ENCODE measurements at regions of chr17 and their contacts with region 1.

Region 1: DNA sequence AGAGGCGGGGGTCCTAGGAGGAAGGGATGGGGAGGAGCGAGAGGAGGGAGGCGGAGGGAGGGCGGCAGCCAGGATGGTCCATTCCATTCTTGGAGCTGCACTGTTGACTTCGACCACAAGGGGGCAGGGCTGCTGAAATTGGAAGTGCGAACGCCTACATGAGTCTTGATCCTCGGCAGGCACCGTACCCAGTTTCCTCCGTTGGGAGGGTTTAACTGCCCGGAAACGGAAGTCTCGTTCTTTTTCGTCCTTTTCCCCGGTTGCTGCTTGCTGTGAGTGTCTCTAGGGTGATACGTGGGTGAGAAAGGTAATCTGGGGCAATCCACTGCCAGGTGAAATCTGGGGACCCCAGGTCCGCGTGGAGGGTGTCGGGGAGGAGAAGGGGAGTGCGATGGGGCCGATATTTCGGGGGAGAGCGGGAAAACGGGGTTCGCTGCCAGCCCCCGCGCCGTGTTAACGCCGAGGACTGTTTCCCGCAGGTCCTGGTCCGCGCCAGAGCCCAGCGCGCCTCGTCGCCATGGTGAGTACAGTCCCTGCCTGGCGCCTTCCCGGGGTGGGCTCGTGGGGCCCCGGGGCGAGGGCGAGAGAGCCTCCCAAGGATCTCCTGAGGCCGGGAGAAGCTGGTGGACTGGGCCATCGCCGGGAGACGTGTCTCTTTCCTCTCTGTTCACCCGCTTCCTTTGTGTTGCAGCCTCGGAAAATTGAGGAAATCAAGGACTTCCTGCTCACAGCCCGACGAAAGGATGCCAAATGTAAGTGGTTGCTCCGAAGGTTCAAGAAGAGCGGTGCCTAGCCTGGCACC is at the start of gene RPL38:
- DNase-seq: peak; percentile 97 to 98
- H3K4me3 ChIP-seq: peak within 1 kb of the TSS; percentile 63 to 97 (median 92)
- H3K27ac ChIP-seq: peak within 1 kb of the TSS; percentile 65 to 91 (median 88)
- H3K4me1 ChIP-seq: peaks cover 33 to 61% (median 53%) of the 10 kb centered on the region in 4 donors
- H3K27me3 ChIP-seq: peaks cover 0 to 38% (median 8%) of the 10 kb centered on the region in 3 donors
- CTCF ChIP-seq: peak in 6 of 7 experiments; percentile 92 to 99 (median 97)
- EP300 ChIP-seq: no peak
- POLR2A ChIP-seq: peak in 2 of 4 donors; percentile 45 to 83
- total RNA-seq, gene RPL38: 37.7 to 1,270 (median 232) TPM

Region 2: DNA sequence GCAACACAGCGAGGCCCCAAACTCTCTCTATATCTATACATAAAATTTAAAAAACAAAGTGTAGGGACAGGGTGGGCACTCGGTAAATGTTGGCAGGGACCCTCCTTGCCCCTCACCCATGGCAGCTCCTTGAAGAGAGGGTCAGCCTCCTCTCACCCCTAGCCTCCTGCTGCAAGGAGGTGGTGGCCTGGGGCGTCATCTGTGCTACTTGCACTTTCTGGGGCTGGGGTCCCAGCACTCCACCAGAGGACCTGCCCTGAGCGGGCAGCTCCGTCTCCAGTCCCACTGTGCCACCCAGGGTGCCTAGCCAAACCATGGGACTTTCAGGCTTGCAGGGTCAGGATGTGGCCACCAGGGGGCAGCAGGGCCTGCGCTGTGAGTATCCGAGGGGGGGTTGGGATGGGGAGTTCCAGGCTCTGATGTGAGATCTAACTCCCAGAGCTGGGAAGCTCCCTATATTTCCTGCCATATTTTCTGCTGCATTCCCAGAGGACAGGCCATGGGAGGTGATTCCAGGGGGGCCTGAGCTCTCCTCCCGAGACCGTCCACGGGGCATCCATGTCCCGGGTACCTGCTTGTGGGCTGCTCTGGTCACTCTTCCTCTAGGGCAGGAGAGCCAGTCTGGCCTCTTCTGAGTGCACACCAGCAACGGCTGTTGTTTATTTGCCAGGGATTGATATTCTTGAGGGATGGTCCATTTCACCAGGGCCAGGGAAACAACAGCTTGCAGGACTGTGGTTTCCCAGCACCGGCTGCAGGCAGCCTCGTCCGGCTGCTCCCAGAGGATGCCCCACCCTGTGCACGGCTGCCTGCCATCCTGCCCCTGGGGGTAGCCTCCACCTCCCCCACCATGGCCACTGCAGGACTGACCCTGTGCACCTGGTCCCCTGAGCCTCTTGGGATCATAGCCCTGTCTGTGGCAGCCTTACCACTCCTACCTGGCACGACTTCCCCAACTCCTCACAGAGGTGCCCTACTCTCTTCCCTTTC is 164.7 kb after region 1 on chr17:
- intact Hi-C with region 1: loop called (anchors 5 kb)
- DNase-seq: peak; percentile 82 to 86
- H3K4me3 ChIP-seq: peak overlapping the region in 1 of 4 donors; percentile 10
- H3K27ac ChIP-seq: no peak overlapping the region
- H3K4me1 ChIP-seq: peaks cover 0 to 18% (median 12%) of the 10 kb centered on the region in 4 donors
- H3K27me3 ChIP-seq: peaks cover 0 to 40% (median 13%) of the 10 kb centered on the region in 3 donors
- CTCF ChIP-seq: peak in 5 of 7 experiments; percentile 89 to 98 (median 95)
- EP300 ChIP-seq: no peak
- POLR2A ChIP-seq: no peak

Measured in stomach (tissue), 19 donors.